ENCODE measurements at regions of chrX and their contacts with region 1.

Region 1: DNA sequence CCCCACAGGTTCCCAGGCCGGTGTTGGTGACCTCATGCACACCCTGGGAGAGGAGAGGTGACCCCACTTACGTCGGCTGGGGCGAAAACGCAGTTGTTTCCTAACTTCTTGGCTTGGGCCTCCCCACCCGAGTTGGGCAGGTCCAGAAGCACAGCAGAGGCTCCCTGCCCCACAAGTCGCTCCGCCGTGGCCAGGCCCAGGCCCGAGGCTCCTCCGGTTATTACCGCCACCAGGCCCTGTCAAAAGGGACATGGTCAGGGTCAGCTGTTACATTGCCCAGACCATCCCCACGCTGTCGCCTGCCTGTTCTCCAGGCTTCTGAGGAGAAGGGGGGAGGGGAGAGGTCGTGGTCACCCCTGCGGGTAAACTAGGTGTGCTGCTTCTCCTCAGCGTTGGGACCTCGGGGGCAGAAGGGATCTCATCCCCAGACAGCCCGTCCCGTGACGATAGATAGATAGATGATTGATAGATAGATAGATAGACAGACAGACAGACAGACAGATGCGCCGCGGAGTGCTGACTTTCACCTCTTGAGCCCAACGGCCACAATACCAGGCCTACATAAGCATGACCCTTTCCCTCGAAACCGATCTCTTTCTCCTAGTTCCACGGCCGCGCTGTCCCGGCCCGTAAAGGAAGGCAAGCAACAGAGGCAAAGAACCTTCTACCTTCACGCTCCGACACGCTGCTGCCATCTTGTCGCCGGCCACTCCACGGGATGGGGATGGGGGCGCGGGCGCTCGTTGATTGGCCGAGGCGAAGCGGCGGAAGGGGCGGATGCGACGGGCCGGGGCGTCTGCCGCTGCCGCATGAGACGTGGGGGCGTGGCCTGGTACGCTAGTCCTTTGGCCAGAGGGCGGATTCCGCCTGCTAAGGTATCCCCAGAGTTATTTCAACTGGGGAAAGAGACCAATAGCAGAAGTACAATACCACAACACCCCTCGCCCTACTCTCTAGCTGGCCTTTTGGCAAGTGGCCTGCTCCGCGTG is at the start of gene HSD17B10:
- DNase-seq: peak; percentile 90
- ATAC-seq: peak; percentile 96
- H3K4me3 Mint-ChIP-seq: peak within 1 kb of the TSS; percentile 98
- H3K27ac Mint-ChIP-seq: peak within 1 kb of the TSS; percentile 95
- H3K4me1 Mint-ChIP-seq: peaks cover 5% of the 10 kb centered on the region
- H3K27me3 Mint-ChIP-seq: peaks cover 9% of the 10 kb centered on the region; the same call in 1 of the 2 replicates
- CTCF ChIP-seq: no peak
- total RNA-seq, gene HSD17B10: 101 to 108 TPM (median 106 TPM) in 3 replicates

Region 2: DNA sequence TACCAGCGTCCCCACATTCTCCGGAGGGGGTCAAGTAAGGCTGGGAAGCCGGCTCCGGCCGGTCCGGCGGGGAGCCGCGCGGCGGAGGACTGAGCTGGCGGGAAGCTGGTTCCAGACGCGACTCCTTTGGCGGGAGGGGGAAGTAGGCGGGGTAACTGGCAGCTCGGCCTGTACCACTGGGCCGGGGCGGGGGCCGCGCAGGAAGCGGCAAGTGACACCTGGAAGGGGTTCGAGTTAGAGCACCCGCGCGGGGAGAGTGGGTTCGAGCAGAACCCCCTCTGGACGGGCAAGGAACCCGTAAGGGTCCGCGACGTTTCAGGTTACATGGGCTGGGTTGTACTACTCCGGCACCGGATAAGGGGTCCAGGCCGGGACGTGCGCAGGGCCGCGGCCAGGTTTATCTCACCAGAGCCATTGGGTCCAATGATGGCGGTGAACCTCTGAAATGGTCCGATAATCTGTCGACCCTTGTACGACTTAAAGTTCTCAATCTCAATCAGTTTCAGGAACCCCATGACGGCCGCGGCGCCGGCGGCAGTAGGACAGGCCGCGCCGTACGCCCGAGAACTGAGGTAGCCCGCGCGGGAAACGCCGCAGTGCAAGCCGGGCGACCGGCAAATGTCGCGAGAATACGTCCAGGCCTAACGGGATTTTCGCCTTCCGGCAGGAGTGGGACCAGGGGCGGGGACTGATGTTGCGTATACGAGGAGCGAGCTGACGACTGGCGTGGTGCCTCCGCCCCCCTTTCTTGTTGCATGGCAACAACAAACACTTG is 11.7 kb before region 1 on chrX and contains the start of gene SMC1A:
- CTCF ChIA-PET with region 1: interaction called, 21 read pairs
- POLR2A ChIA-PET with region 1: interaction called, 6 read pairs
- DNase-seq: peak; percentile 95
- ATAC-seq: peak; percentile 91
- H3K4me3 Mint-ChIP-seq: peak within 1 kb of the TSS; percentile 96
- H3K27ac Mint-ChIP-seq: peak within 1 kb of the TSS; percentile 100
- H3K4me1 Mint-ChIP-seq: peaks cover 14% of the 10 kb centered on the region
- H3K27me3 Mint-ChIP-seq: no peaks in the 10 kb centered on the region
- CTCF ChIP-seq: no peak
- total RNA-seq, gene SMC1A: 87.4 to 98.7 TPM (median 89.3 TPM) in 3 replicates